ENCODE measurements at regions of chr2 and their contacts with region 1.

Region 1: DNA sequence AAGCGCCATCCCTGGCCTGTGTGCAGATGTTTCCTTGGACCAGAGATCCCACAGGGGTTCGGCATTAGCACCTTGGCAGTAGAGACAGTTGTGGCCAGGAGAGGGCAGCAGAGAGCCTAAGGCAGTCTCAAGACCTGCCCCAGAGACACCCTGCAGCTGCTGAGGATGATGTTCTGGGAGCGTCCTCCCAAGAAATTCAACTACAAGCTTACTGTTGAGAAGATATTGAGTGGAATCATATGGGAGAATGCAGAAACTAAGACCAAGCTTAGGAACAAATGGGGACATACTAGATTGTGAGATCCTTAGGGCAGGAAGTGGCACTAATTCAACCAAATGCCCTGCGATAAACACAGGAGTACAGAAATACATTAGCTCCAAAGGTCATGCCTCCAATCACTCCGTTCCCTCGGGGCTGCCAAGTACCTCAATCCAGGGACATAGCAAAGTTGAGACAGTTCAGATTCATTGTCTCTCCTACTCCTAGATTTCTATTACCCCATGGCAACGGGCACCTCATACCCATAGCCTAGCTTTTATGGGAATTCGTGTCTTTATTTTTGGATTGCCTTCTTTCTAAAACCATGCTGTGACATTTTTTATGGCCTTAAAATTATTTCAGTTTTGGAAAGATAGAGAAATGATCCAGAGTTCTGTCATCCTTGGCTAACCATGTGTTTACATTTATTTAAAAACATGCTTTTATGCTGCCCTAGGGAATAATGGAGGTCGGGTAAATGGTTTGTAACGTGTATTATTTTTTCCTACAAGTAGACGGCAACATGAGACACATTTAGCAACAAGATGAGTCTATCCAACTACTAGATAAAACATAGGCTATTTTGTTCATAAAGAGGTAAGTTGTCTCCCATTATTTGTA is 2.2 kb upstream of the ERMN start:
- DNase-seq: peak; percentile 89 to 93
- H3K4me3 ChIP-seq: no peak overlapping the region
- H3K27ac ChIP-seq: peak overlapping the region in 1 of 5 donors; percentile 62
- H3K4me1 ChIP-seq: peaks cover 0 to 24% (median 18%) of the 10 kb centered on the region in 4 donors
- H3K27me3 ChIP-seq: no peaks in the 10 kb centered on the region
- CTCF ChIP-seq: peak in 5 of 7 experiments; percentile 69 to 88 (median 82)
- EP300 ChIP-seq: no peak
- POLR2A ChIP-seq: no peak

Region 2: DNA sequence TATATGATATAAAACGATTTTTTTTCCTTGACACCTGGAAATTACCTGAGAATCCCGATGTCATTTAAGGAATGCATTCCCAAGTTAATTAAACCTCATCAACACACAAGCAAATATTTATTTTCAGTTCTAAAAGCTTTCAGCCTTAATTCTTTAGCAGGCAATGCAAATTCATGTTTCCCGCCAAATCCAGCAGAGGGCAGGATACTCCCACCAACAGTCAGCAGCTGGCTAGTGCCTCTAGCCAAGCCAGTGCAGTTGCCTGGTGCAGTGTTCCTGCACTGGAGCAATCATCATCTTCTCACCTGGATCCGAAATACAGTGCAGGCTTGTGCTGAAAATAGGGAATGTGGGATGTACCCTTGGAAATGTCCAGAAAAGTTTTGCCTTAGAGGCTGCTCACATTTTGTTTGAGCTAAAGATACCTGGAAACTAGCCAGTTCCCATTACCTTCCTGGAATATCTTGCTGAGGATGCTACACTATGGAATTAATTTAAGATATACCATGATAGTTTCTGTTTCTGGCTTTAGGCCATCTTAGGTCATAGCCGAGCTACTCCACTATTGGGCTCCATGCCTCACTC is 164.4 kb after region 1 on chr2:
- intact Hi-C with region 1: loop called (anchors 10 kb)
- DNase-seq: peak; percentile 72 to 89
- H3K4me3 ChIP-seq: no peak overlapping the region
- H3K27ac ChIP-seq: no peak overlapping the region
- H3K4me1 ChIP-seq: peaks cover 4 to 20% (median 5%) of the 10 kb centered on the region in 4 donors
- H3K27me3 ChIP-seq: no peaks in the 10 kb centered on the region
- CTCF ChIP-seq: peak in 5 of 7 experiments; percentile 48 to 76 (median 63)
- EP300 ChIP-seq: no peak
- POLR2A ChIP-seq: no peak